ENCODE measurements at regions of chr13 and their contacts with region 1.

Region 1: DNA sequence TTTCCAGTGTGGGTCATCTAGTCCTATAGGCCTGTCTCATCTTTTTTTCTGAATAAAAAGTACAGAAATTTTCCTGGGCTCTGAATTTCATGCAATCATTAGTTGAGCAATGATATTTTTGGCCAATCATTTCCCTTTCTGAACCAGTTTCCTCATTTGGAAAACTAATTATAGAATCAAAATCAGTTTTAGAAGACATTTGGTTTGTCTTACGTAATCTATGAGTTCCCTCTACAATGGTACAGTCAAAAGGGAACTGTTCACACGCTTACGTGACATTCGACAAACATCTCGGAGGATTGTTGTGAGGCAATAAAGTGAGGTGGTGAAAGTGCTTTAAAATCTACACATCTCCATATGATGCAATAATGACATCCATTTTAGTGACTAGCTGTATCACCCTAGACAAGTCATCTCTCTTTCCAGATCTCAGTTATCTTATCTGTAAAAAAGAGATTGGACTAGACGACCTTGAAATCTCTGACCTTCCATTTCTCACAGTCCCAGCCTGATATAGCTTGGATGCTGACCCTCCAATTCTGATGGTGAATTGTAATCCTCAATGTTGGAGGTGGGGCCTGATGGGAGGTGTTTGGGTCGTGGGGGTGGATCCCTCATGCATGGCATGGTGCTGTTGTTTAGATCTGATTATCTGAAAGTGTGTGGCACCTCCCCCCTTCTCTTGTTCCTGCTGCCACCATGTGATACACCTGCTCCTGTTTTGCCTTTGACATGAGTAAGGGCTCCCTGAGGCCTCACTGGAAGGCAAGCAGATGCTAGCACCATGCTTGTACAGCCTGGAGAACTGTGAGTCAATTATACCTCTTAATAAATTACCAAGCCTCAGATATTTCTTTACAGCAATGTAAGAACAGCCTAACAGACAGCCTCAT is 26.7 kb downstream of the FLT1 start:
- DNase-seq: peak; percentile 97 to 100 (median 99)
- H3K4me3 ChIP-seq: no peak overlapping the region
- H3K4me3 Mint-ChIP-seq: no peak overlapping the region
- H3K27ac ChIP-seq: peak overlapping the region; percentile 87 to 91
- H3K27ac Mint-ChIP-seq: peak overlapping the region; percentile 92 to 98 (median 97)
- H3K4me1 ChIP-seq: peaks cover 46 to 56% of the 10 kb centered on the region in 2 donors
- H3K4me1 Mint-ChIP-seq: peaks cover 44% of the 10 kb centered on the region
- H3K27me3 ChIP-seq: no peaks in the 10 kb centered on the region
- H3K27me3 Mint-ChIP-seq: peaks cover 0 to 13% (median 6%) of the 10 kb centered on the region in 3 donors
- CTCF ChIP-seq: no peak

Region 2: GRCh38 chr13:28401303-28402056 is 66.8 kb before region 1 on chr13:
- intact Hi-C with region 1: loop called in 1 of 2 experiments (anchors 10 kb)
- DNase-seq: peak; percentile 73 to 91 (median 91)
- H3K4me3 ChIP-seq: peak overlapping the region in 1 of 3 experiments; percentile 24
- H3K4me3 Mint-ChIP-seq: peak overlapping the region in 1 of 2 donors; percentile 55
- H3K27ac ChIP-seq: peak overlapping the region in 1 of 2 donors; percentile 50
- H3K27ac Mint-ChIP-seq: peak overlapping the region; percentile 24 to 81 (median 72)
- H3K4me1 ChIP-seq: peaks cover 16 to 28% of the 10 kb centered on the region in 2 donors
- H3K4me1 Mint-ChIP-seq: peaks cover 22% of the 10 kb centered on the region
- H3K27me3 ChIP-seq: peaks cover 0 to 11% of the 10 kb centered on the region in 2 donors
- H3K27me3 Mint-ChIP-seq: peaks cover 8 to 16% (median 12%) of the 10 kb centered on the region in 3 donors
- CTCF ChIP-seq: no peak

Region 3: GRCh38 chr13:28423010-28423409 is 45.3 kb before region 1 on chr13:
- intact Hi-C with region 1: loop called in 1 of 2 experiments (anchors 5 kb)
- DNase-seq: peak; percentile 66 to 91 (median 81)
- H3K4me3 ChIP-seq: peak overlapping the region in 2 of 3 experiments; percentile 35 to 53
- H3K4me3 Mint-ChIP-seq: peak overlapping the region; percentile 64 to 82
- H3K27ac ChIP-seq: peak overlapping the region in 1 of 2 donors; percentile 30
- H3K27ac Mint-ChIP-seq: peak overlapping the region; percentile 82 to 93 (median 89)
- H3K4me1 ChIP-seq: peaks cover 32 to 48% of the 10 kb centered on the region in 2 donors
- H3K4me1 Mint-ChIP-seq: peaks cover 46% of the 10 kb centered on the region
- H3K27me3 ChIP-seq: peaks cover 0 to 7% of the 10 kb centered on the region in 2 donors
- H3K27me3 Mint-ChIP-seq: peaks cover 6 to 15% (median 7%) of the 10 kb centered on the region in 3 donors
- CTCF ChIP-seq: no peak

Region 4: GRCh38 chr13:28574617-28575142 is 106.4 kb after region 1 on chr13:
- intact Hi-C with region 1: loop called (anchors 2 to 10 kb)
- DNase-seq: peak; percentile 95 to 100 (median 100)
- H3K4me3 ChIP-seq: no peak overlapping the region
- H3K4me3 Mint-ChIP-seq: peak overlapping the region in 1 of 2 donors; percentile 54
- H3K27ac ChIP-seq: peak overlapping the region; percentile 79 to 93
- H3K27ac Mint-ChIP-seq: peak overlapping the region; percentile 98 to 100 (median 100)
- H3K4me1 ChIP-seq: peaks cover 41 to 49% of the 10 kb centered on the region in 2 donors
- H3K4me1 Mint-ChIP-seq: peaks cover 48% of the 10 kb centered on the region
- H3K27me3 ChIP-seq: peaks cover 0 to 3% of the 10 kb centered on the region in 2 donors
- H3K27me3 Mint-ChIP-seq: peaks cover 6 to 21% (median 12%) of the 10 kb centered on the region in 3 donors
- CTCF ChIP-seq: no peak